Dorsolateral prefrontal cortex (tissue), 120 donors: ENCODE measurements at regions of chr14 and their contacts with region 1.

Region 1: DNA sequence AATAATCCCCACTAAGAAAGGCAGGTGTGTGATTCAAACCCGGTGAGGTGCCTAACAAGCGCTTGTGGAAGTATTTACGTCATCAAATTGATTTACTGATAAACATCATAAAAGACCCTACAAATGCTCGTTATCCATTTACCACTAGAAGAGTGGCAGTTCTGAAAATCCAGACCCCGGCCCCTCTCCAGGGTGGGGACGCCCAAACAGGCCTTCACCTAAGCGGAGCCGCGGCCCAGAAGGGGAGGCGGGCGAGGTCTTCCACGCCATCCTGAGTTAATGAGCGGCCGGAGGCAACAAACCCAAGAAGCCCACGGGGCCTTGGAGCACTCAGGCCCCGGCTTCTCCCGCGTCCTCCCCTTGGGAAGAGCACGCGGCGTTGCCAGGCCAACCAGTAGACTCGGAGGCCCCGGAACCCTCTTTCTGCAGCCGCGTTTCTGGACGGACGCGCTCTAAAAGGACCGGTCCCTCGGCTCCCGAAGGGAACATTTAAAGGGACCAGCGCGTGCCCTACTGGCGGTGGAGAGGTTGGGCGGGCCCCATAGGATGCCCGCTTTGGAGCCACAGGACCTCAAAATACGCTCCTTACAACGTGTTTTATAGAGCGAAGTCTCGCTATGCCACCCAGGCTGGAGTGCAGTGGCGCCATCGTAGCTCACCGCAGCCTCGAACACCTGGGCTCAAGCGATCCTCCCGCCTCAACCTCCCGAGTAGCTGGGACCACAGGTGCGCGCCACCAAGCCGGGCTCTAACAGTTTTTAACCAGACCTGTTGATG is 3.5 kb downstream of the PTPN21 start:
- DNase-seq: peak; percentile 72 to 90 (median 84)
- H3K4me3 ChIP-seq: peak overlapping the region; percentile 52 to 95 (median 79)
- H3K27ac ChIP-seq: peak overlapping the region in 58 of 59 donors; percentile 10 to 88 (median 69)
- H3K27me3 ChIP-seq: no peaks in the 10 kb centered on the region
- CTCF ChIP-seq: peak; percentile 32 to 77 (median 58)

Region 2: GRCh38 chr14:87992718-87993628 is 558.3 kb before region 1 on chr14 and contains the start of gene GALC:
- intact Hi-C with region 1: loop called in 1 of 2 experiments (anchors 10 kb)
- DNase-seq: peak; percentile 94 to 96 (median 95)
- H3K4me3 ChIP-seq: peak within 1 kb of the TSS; percentile 61 to 92 (median 79)
- H3K27ac ChIP-seq: peak within 1 kb of the TSS; percentile 72 to 99 (median 97)
- H3K27me3 ChIP-seq: no peaks in the 10 kb centered on the region
- CTCF ChIP-seq: peak in 25 of 56 donors; percentile 7 to 44 (median 23)
- total RNA-seq, gene GALC: 23.9 to 65.1 (median 41.0) TPM

Region 3: GRCh38 chr14:88189417-88190191 is 361.7 kb before region 1 on chr14:
- intact Hi-C with region 1: loop called in 1 of 2 experiments (anchors 2 kb)
- DNase-seq: peak in 6 of 10 donors; percentile 46 to 88 (median 69)
- H3K4me3 ChIP-seq: peak overlapping the region in 23 of 59 donors; percentile 1 to 42 (median 21)
- H3K27ac ChIP-seq: peak overlapping the region in 7 of 59 donors; percentile 15 to 56 (median 33)
- H3K27me3 ChIP-seq: peaks cover 0 to 4% (median 0%) of the 10 kb centered on the region in 45 donors
- CTCF ChIP-seq: peak; percentile 35 to 87 (median 74)

Region 4: GRCh38 chr14:88323523-88324199 is 227.6 kb before region 1 on chr14:
- intact Hi-C with region 1: loop called in 1 of 2 experiments (anchors 10 kb)
- DNase-seq: peak in 8 of 10 donors; percentile 30 to 77 (median 50)
- H3K4me3 ChIP-seq: peak overlapping the region; percentile 47 to 78 (median 63)
- H3K27ac ChIP-seq: peak overlapping the region in 53 of 59 donors; percentile 1 to 88 (median 77)
- H3K27me3 ChIP-seq: peaks cover 0 to 36% (median 7%) of the 10 kb centered on the region in 45 donors
- CTCF ChIP-seq: no peak

Region 5: DNA sequence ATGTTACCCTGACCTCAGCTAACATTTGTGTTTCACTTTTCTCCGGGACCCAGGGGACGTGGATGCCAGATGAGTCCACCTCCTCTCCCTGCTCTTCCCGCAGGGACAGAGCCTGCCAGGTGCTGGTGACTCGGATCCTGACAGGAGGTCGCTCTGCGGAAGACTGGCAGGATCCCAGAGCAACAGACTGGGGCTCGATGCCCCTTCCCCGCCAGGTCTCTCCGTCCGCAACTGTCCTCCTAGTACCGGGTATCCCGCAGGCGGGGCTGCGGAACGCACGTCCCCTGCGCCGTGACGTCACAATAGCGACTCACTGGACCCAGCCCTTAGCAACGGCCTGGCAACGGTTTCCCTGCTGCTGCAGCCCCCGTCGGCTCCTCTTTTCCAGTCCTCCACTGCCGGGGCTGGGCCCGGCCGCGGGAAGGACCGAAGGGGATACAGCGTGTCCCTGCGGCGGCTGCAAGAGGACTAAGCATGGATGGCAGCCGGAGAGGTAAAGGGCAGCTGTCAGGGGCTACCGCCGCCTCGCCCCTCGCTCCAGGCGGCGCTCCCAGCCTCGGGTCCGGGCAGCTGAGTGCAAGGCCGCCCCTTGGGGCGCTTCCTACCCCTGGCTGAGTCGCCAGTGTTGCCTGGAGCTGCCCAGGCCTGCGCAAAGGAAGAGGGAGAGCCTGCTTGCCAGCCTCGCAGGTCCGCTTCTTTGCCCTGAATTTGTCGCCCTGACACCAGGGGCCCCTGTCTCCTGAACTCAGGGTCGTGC is 165.8 kb before region 1 on chr14 and contains the start of gene SPATA7:
- intact Hi-C with region 1: loop called in 1 of 2 experiments (anchors 5 kb)
- DNase-seq: peak; percentile 93 to 98 (median 97)
- H3K4me3 ChIP-seq: peak within 1 kb of the TSS; percentile 63 to 100 (median 92)
- H3K27ac ChIP-seq: peak within 1 kb of the TSS; percentile 46 to 97 (median 89)
- H3K27me3 ChIP-seq: no peaks in the 10 kb centered on the region
- CTCF ChIP-seq: peak in 33 of 56 donors; percentile 3 to 54 (median 28)
- total RNA-seq, gene SPATA7: 23.6 to 62.5 (median 38.1) TPM

Region 6: DNA sequence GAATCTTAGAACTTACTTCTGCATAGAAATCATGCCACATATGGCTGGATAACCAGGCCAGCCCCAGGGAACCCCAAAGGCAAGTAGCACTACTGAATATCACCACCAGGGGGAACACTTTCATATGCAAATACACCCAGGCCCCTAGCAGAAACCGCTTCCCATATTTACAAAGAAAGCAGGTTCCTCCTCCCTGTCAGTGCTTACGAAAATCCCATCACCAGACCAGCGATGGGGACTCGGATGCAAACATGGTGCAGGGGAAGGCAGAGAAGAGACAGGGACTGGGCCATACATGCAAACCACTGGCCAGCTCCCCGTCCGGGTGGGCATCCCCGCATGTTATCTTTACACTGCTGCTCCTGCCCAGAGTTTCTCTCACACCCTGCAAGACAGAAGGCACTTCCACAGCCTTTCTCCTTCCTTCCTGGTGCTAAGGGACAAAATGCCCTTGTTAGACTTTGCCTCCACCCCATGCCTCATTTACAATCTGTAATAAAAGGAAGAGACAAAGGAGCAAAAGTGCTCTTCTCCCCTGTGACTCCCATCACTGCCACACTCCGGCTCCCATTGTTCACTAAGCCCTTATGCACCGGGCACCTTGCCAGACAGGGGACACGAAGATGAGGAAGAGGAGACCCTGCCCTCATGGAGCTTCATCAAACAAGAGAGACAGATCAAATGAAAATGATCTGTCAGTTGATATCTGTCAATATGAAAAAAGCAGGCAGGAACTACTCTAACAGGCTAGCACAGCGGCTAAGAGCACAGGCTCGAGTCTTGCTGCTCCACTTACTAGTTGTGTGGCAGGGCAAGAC is 58.8 kb before region 1 on chr14:
- intact Hi-C with region 1: loop called (anchors 2 to 5 kb)
- DNase-seq: peak in 4 of 10 donors; percentile 49 to 70 (median 62)
- H3K4me3 ChIP-seq: no peak overlapping the region
- H3K27ac ChIP-seq: peak overlapping the region in 13 of 59 donors; percentile 4 to 66 (median 25)
- H3K27me3 ChIP-seq: no peaks in the 10 kb centered on the region
- CTCF ChIP-seq: peak; percentile 75 to 97 (median 90)